Activated B cell treated with CpG ODN at 0.5 μM for 24 hours (primary cell): ENCODE measurements at regions of chr10 and their contacts with region 1.

Region 1: DNA sequence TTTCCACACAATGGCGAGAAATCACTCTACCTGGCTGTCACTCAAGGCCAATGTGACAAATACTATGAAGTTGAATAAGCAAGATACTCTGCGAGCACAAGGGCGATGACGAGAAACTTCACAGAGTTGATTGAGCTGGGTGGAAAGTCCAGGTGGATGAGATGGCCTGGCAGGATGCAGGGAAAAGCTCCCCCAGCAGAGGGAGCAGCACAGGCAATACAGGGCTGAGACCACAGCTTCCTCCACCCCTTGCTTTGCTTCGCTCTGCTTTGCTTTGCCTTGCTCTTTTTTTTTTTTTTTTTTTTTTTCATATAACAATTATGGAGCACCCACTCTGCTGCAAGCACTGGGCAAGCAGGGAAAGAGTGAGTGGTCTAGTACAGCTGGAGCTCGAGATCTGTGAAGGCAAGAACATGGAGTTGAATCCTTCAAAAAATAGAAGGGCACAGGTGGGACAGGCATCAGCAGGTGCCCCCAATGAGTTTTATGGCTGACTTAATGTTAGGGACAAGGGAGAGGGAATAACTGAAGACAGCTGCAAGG is 88.3 kb downstream of the CABCOCO1 start:
- DNase-seq: peak; percentile 47
- ATAC-seq: peak; percentile 97
- H3K4me3 Mint-ChIP-seq: peak overlapping the region; percentile 44
- H3K27ac Mint-ChIP-seq: no peak overlapping the region
- H3K4me1 Mint-ChIP-seq: peaks cover 38% of the 10 kb centered on the region
- H3K27me3 Mint-ChIP-seq: no peaks in the 10 kb centered on the region
- CTCF ChIP-seq: no peak

Region 2: DNA sequence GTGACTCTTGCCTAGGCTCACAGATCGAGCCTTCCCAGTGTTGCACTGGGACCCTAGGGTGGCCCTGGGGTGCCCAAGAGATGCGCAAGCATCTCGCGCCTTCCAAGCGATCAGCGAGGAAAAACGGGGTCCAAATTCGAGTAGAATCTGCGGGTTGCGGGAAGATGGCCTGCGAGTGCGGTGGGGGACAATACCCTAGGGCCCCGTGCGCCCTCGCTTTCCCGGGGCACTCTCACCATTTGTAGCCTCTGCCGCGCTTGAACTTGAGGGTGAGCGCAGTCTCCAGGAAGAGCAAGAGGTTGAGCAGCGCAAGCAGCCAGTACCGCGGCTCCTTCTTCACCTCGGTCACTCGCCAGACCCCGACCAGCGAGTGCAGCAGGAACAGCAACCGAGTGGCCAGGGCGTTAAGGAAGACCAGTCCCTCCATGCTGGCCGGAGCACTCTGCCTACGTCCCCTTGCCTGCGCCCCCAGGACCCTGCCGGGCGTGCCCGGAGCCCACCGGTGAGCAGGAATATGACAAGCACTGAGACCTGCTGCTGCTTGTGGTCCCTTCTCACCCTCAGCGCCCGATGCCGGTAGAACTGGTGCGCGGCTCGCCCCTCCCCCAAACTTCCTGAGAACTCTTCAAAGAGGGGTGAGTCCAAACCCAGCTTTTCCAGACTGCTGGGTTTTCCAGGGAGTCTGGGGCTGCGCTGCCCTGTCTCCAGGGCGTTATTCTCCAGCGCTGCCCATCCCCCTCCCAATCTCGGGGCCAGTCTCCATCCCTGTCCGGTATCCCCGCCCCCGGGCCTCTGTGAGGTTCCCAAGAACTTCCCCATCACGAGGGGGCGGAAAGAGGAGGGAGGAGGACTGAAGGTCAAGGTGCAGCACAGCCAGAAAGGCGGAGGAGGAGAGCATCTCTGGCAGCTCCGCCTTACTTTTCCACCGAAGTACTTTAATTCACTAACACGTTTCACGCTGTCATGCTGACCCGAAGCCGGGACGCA is 298.1 kb before region 1 on chr10 and contains the start of gene TMEM26:
- CTCF ChIA-PET with region 1: no interaction called
- POLR2A ChIA-PET with region 1: no interaction called
- intact Hi-C with region 1: no loop called
- DNase-seq: no peak
- ATAC-seq: no peak
- H3K4me3 Mint-ChIP-seq: peak within 1 kb of the TSS; percentile 30
- H3K27ac Mint-ChIP-seq: no peak within 1 kb of the TSS
- H3K4me1 Mint-ChIP-seq: peaks cover 8% of the 10 kb centered on the region
- H3K27me3 Mint-ChIP-seq: peaks cover 41% of the 10 kb centered on the region
- CTCF ChIP-seq: no peak
- total RNA-seq, gene TMEM26: not detected in 2 replicates

Region 3: DNA sequence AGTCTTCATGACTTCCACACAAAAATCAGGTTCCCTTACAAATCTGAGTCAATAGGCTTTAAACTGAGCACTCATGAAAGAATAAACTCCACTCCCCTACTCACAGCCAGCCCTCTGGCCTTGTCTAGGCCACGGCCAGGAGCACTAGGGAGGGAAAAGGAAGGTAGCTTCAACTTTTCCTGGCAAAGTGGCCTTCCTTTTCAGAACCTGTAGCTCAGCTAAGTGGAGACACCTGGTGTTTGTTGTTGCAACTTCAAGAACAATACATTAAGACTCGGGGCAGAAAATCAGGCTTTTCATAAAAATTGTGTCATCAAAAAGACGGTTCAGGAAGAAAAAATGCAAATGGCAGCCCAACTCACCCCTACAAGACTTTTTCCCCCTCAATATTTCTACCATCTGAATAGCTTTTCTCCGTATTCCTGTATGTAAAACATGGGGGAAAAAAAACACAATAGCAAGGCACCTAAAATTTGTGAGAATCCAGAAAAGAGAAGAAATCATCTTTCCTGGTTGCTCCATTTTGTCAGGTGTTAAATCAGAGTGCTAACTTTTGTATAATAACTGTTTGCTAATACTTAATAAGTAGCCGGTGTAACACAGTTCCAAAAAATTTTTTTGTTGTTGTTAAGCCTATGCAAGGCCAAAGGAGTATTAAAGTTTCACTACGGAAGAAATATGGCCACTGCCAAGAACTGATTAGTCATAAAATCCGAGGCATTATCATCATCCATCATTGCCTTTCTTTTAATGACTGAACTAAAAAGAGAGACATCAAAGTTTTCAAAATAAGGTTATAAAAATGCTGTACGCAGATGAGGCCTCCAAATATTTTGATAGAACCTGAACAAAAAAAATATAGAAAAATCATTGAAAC is 84.3 kb after region 1 on chr10:
- CTCF ChIA-PET with region 1: interaction called, 7 read pairs
- POLR2A ChIA-PET with region 1: no interaction called
- intact Hi-C with region 1: loop called (anchors 1 kb)
- DNase-seq: no peak
- ATAC-seq: no peak
- H3K4me3 Mint-ChIP-seq: no peak overlapping the region
- H3K27ac Mint-ChIP-seq: no peak overlapping the region
- H3K4me1 Mint-ChIP-seq: no peaks in the 10 kb centered on the region
- H3K27me3 Mint-ChIP-seq: no peaks in the 10 kb centered on the region
- CTCF ChIP-seq: no peak

Region 4: GRCh38 chr10:61869774-61870525 is 119.0 kb after region 1 on chr10:
- CTCF ChIA-PET with region 1: interaction called, 12 read pairs
- POLR2A ChIA-PET with region 1: no interaction called
- intact Hi-C with region 1: loop called (anchors 1 kb)
- DNase-seq: no peak
- ATAC-seq: no peak
- H3K4me3 Mint-ChIP-seq: no peak overlapping the region
- H3K27ac Mint-ChIP-seq: no peak overlapping the region
- H3K4me1 Mint-ChIP-seq: peaks cover 2% of the 10 kb centered on the region
- H3K27me3 Mint-ChIP-seq: no peaks in the 10 kb centered on the region
- CTCF ChIP-seq: no peak

Region 5: GRCh38 chr10:61896854-61897661 is 146.1 kb after region 1 on chr10:
- CTCF ChIA-PET with region 1: interaction called, 10 read pairs
- POLR2A ChIA-PET with region 1: interaction called, 72 read pairs
- intact Hi-C with region 1: loop called (anchors 1 kb)
- DNase-seq: peak; percentile 43
- ATAC-seq: peak; percentile 71
- H3K4me3 Mint-ChIP-seq: peak overlapping the region; percentile 97
- H3K27ac Mint-ChIP-seq: peak overlapping the region; percentile 98
- H3K4me1 Mint-ChIP-seq: peaks cover 37% of the 10 kb centered on the region
- H3K27me3 Mint-ChIP-seq: no peaks in the 10 kb centered on the region
- CTCF ChIP-seq: no peak

Region 6: GRCh38 chr10:61923213-61923949 is 172.4 kb after region 1 on chr10:
- CTCF ChIA-PET with region 1: no interaction called
- POLR2A ChIA-PET with region 1: interaction called, 12 read pairs
- intact Hi-C with region 1: no loop called
- DNase-seq: no peak
- ATAC-seq: no peak
- H3K4me3 Mint-ChIP-seq: no peak overlapping the region
- H3K27ac Mint-ChIP-seq: peak overlapping the region; percentile 15
- H3K4me1 Mint-ChIP-seq: peaks cover 57% of the 10 kb centered on the region
- H3K27me3 Mint-ChIP-seq: no peaks in the 10 kb centered on the region
- CTCF ChIP-seq: no peak

Region 7: DNA sequence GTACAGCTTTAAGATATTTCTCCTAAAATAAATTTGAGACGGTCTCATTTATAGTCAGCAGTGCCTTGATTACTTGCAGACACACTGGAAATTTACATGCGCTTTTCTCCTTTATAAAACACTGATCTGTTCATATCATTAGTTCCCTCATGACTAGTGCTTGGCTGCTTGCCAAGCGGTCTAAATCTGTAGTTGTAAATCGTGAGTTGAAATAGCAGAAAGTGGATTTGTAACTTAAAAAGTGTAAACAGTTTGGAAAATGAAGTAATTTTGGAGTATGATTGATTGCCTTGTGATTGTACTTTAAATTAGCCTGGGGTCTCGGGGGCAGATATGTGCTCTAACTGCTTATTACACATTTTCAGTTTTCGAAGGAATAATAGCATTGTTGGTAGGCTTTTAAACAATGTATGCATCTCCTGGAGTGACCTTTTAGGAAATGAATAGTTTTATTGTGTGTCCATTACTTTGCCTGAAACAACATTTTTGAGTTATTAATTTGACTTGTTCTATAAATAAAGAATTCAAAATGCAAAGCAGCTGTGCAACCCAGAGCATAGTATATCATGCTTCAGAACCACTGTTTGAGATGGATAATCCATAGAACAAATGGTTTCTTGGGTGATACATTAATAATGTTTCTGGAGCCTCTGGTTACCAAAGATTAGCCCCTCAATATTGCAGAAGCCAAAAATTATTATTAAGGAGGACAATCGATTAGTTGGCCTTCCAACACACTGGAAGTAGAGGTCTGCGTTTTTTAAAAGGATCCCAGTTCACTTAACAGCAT is 223.8 kb after region 1 on chr10:
- CTCF ChIA-PET with region 1: no interaction called
- POLR2A ChIA-PET with region 1: no interaction called
- intact Hi-C with region 1: no loop called
- DNase-seq: no peak
- ATAC-seq: no peak
- H3K4me3 Mint-ChIP-seq: peak overlapping the region; percentile 60
- H3K27ac Mint-ChIP-seq: peak overlapping the region; percentile 81
- H3K4me1 Mint-ChIP-seq: peaks cover 84% of the 10 kb centered on the region
- H3K27me3 Mint-ChIP-seq: no peaks in the 10 kb centered on the region
- CTCF ChIP-seq: no peak

Region 8: GRCh38 chr10:62422068-62422590 is 671.1 kb after region 1 on chr10:
- CTCF ChIA-PET with region 1: no interaction called
- POLR2A ChIA-PET with region 1: no interaction called
- intact Hi-C with region 1: loop called (anchors 2 kb)
- DNase-seq: no peak
- ATAC-seq: no peak
- H3K4me3 Mint-ChIP-seq: no peak overlapping the region
- H3K27ac Mint-ChIP-seq: no peak overlapping the region
- H3K4me1 Mint-ChIP-seq: no peaks in the 10 kb centered on the region
- H3K27me3 Mint-ChIP-seq: peaks cover 13% of the 10 kb centered on the region
- CTCF ChIP-seq: no peak